Activated T-helper 2 cell treated with anti-CD3 and anti-CD28 coated beads, Interferon-gamma antibody, Interleukin-2, Interleukin-4, amounts not matched to agents 10 μg/mL and 5 μg/mL and 100 μg/mL, durations not matched to agents 14 hours and 24 hours and 36 hours (primary cell): ENCODE measurements at regions of chr11 and their contacts with region 1.

Region 1: DNA sequence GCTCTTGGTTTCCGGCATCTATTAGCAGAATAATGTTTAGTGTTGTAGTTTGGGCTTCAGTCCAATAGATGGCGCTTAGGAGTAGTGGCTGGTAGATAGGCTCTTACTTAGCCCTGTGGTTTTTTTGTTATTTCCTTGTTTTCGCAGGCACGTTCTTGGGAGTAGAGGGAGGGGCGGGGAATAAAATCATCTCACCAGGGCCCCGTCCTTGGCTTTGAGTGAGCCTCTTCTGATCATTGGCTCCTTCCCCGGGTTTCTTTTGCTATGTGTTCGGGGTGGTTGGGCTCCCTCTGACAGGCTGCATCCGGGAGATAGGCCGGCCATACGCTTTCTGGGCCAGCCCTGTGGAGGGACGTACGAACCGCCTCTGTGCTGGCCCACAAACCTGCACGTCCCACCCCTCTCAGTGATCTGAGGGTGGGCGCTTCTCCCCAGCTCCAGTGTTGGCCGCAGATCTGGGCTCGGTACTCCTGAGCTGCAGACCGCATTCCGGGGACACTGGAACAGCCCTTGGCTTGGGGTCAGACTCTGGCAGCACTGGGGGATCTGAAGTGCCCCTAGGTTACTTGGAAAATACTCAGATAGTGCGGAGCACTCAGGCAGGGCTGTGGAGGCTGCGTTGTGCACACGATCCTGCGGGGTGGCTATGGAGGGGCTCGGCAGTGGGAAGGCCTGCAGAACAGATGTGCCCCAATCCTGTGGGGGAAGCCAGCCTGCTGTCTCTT is 217.0 kb downstream of the DYNC2H1 start:
- DNase-seq: peak; percentile 24
- H3K4me3 Mint-ChIP-seq: no peak overlapping the region
- H3K27ac Mint-ChIP-seq: no peak overlapping the region
- H3K4me1 Mint-ChIP-seq: peaks cover 3% of the 10 kb centered on the region
- H3K27me3 Mint-ChIP-seq: peaks cover 4% of the 10 kb centered on the region

Region 2: GRCh38 chr11:103537904-103538502 is 211.8 kb after region 1 on chr11:
- intact Hi-C with region 1: loop called (anchors 5 kb)
- DNase-seq: no peak
- H3K4me3 Mint-ChIP-seq: no peak overlapping the region
- H3K27ac Mint-ChIP-seq: no peak overlapping the region
- H3K4me1 Mint-ChIP-seq: no peaks in the 10 kb centered on the region
- H3K27me3 Mint-ChIP-seq: no peaks in the 10 kb centered on the region

Region 3: GRCh38 chr11:103601225-103601846 is 275.1 kb after region 1 on chr11:
- intact Hi-C with region 1: loop called (anchors 1 kb)
- DNase-seq: no peak
- H3K4me3 Mint-ChIP-seq: no peak overlapping the region
- H3K27ac Mint-ChIP-seq: no peak overlapping the region
- H3K4me1 Mint-ChIP-seq: no peaks in the 10 kb centered on the region
- H3K27me3 Mint-ChIP-seq: no peaks in the 10 kb centered on the region